ENCODE measurements at regions of chr15 and their contacts with region 1.

Region 1: GRCh38 chr15:69462493-69463181 is 10.0 kb downstream of the RPLP1 start:
- DNase-seq: peak; percentile 96
- ATAC-seq: peak; percentile 82
- H3K4me3 ChIP-seq: peak overlapping the region; percentile 72
- H3K27ac ChIP-seq: peak overlapping the region; percentile 65
- H3K4me1 ChIP-seq: peaks cover 40% of the 10 kb centered on the region
- H3K27me3 ChIP-seq: no peaks in the 10 kb centered on the region
- CTCF ChIP-seq: peak; percentile 77

Region 2: GRCh38 chr15:70245932-70246331 is 783.3 kb after region 1 on chr15:
- CTCF ChIA-PET with region 1: no interaction called
- POLR2A ChIA-PET with region 1: interaction called, 14 read pairs
- intact Hi-C with region 1: no loop called
- DNase-seq: peak; percentile 71
- ATAC-seq: peak; percentile 70
- H3K4me3 ChIP-seq: no peak overlapping the region
- H3K27ac ChIP-seq: peak overlapping the region; percentile 53
- H3K4me1 ChIP-seq: peaks cover 11% of the 10 kb centered on the region
- H3K27me3 ChIP-seq: no peaks in the 10 kb centered on the region
- CTCF ChIP-seq: no peak

Measured in PC-3 (cell line).